ENCODE measurements at regions of chr20 and their contacts with region 1.

Region 1: DNA sequence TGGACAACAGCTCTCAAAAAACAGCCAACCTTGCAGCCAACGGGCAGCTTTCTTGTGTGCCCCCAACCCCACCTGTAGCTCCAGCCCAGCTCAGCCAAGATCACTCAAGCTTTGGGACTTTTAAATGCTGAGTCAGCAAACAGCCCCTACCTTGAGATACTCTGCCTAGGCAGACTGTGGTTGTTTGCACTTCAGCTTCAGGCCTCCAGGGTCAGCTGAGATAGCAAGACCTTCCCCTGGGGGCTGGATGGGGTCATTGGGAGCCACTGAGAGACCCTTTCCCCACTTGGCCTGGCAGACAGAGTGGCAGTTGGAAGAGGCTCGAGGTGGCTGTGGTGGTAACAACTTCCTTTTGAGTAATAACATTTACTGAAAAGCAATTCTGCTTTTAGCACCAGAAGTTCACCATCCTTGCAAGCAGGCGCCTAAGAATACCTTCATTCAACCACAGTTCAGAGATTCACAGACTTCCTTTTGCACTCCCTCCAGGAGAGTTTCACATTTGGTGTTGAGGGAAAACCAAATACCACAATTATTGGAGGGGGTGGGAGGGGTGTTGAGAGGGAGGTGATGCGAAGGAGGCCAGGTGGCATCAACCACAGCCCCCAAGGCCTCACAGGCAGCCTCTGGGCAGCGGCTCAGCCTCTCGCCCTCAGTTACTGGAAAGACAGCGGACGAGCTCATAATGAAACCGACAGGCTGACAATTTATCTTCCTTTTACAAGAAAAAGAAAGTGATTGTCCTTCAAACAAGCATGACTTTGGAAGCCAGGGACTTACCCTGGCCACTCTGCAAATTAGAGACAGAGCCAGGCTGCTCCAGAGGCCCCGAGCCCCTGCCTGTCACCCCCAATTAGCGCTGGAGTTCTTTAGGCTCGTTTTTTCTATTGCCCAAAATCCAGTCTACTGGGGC is 148.1 kb downstream of the CEBPB start:
- DNase-seq: peak in 5 of 9 donors; percentile 5 to 74 (median 21)
- ATAC-seq: peak; percentile 73
- H3K4me3 ChIP-seq: peak overlapping the region; percentile 27
- H3K4me3 Mint-ChIP-seq: peak overlapping the region; percentile 34 to 79 (median 62)
- H3K27ac ChIP-seq: peak overlapping the region; percentile 18
- H3K27ac Mint-ChIP-seq: peak overlapping the region; percentile 51 to 94 (median 81)
- H3K4me1 ChIP-seq: peaks cover 13 to 20% of the 10 kb centered on the region in 2 donors
- H3K4me1 Mint-ChIP-seq: peaks cover 20 to 72% (median 25%) of the 10 kb centered on the region in 7 donors
- H3K27me3 ChIP-seq: no peaks in the 10 kb centered on the region
- H3K27me3 Mint-ChIP-seq: peaks cover 0 to 3% (median 0%) of the 10 kb centered on the region in 5 donors

Region 2: GRCh38 chr20:50296836-50297375 is 41.8 kb before region 1 on chr20:
- CTCF ChIA-PET with region 1: no interaction called
- POLR2A ChIA-PET with region 1: no interaction called
- intact Hi-C with region 1: loop called in 1 of 2 experiments (anchors 2 kb)
- DNase-seq: no peak
- ATAC-seq: no peak
- H3K4me3 ChIP-seq: no peak overlapping the region
- H3K4me3 Mint-ChIP-seq: no peak overlapping the region
- H3K27ac ChIP-seq: no peak overlapping the region
- H3K27ac Mint-ChIP-seq: no peak overlapping the region
- H3K4me1 ChIP-seq: no peaks in the 10 kb centered on the region
- H3K4me1 Mint-ChIP-seq: peaks cover 6 to 34% (median 10%) of the 10 kb centered on the region in 7 donors
- H3K27me3 ChIP-seq: no peaks in the 10 kb centered on the region
- H3K27me3 Mint-ChIP-seq: peaks cover 0 to 5% (median 4%) of the 10 kb centered on the region in 5 donors

Region 3: DNA sequence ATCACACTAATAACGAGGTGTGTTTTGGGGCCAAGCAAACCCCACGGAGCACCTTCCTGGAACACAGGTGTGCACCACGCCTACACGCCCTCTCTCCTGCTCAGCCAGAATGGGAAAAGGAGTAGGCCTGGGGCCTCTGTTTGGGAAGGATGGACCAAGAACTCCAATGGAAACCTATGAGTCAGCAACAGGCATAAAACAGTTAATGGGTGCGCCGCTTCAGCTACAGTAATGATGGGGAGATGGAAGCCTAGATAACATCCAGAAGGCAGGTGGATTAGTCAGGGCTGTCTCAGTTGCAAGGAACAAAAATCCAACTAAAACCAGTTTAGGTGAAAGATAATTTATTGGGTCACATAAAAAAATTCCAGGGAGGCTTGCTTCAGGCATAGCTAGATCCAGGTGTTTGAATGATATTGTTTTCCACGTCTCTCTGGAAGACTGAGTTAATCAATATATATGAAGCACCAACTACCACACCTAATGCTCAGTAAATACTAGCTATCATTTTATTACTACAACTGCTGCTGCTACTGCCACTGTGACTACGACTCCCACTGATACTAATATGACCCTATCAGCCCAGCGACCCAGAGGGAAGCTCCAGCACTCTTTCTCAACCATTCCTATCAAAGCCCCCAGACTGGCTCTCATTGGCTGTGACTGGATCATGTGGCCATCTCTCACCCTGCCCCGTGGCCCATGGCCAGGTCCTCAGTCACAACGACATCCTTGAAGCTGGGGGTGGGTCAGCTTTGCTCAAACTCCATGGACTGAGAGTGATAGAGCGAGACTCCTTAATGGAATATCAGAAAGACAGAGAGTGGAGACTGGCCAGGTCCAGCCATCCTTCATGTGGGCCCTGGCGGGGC is 16.2 kb after region 1 on chr20:
- CTCF ChIA-PET with region 1: no interaction called
- POLR2A ChIA-PET with region 1: no interaction called
- intact Hi-C with region 1: no loop called
- DNase-seq: no peak
- ATAC-seq: no peak
- H3K4me3 ChIP-seq: no peak overlapping the region
- H3K4me3 Mint-ChIP-seq: no peak overlapping the region
- H3K27ac ChIP-seq: no peak overlapping the region
- H3K27ac Mint-ChIP-seq: no peak overlapping the region
- H3K4me1 ChIP-seq: no peaks in the 10 kb centered on the region
- H3K4me1 Mint-ChIP-seq: peaks cover 4 to 35% (median 6%) of the 10 kb centered on the region in 7 donors
- H3K27me3 ChIP-seq: no peaks in the 10 kb centered on the region
- H3K27me3 Mint-ChIP-seq: peaks cover 0 to 7% (median 0%) of the 10 kb centered on the region in 5 donors

Region 4: DNA sequence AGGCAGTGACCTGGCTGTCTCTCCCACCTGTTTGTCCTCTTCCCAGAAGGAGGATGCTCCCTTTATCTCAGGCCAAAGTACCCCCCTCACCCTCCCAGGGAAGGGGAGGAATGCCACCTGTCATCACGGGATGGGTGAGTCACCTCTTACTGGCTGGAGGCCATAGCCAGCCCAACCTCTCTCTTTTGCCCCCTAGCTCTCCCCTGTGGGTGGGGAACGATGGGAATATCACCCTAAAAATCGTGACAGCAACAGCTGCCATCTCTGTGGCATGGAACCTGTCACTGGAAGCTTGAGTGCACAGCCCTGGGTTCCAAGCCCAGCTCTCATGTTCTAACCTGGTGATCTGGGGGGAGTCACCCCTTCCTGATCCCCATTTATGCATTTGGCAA is 34.0 kb after region 1 on chr20:
- CTCF ChIA-PET with region 1: no interaction called
- POLR2A ChIA-PET with region 1: no interaction called
- intact Hi-C with region 1: no loop called
- DNase-seq: no peak
- ATAC-seq: no peak
- H3K4me3 ChIP-seq: no peak overlapping the region
- H3K4me3 Mint-ChIP-seq: no peak overlapping the region
- H3K27ac ChIP-seq: no peak overlapping the region
- H3K27ac Mint-ChIP-seq: no peak overlapping the region
- H3K4me1 ChIP-seq: no peaks in the 10 kb centered on the region
- H3K4me1 Mint-ChIP-seq: peaks cover 0 to 29% (median 5%) of the 10 kb centered on the region in 7 donors
- H3K27me3 ChIP-seq: no peaks in the 10 kb centered on the region
- H3K27me3 Mint-ChIP-seq: peaks cover 0 to 10% (median 5%) of the 10 kb centered on the region in 5 donors

Region 5: DNA sequence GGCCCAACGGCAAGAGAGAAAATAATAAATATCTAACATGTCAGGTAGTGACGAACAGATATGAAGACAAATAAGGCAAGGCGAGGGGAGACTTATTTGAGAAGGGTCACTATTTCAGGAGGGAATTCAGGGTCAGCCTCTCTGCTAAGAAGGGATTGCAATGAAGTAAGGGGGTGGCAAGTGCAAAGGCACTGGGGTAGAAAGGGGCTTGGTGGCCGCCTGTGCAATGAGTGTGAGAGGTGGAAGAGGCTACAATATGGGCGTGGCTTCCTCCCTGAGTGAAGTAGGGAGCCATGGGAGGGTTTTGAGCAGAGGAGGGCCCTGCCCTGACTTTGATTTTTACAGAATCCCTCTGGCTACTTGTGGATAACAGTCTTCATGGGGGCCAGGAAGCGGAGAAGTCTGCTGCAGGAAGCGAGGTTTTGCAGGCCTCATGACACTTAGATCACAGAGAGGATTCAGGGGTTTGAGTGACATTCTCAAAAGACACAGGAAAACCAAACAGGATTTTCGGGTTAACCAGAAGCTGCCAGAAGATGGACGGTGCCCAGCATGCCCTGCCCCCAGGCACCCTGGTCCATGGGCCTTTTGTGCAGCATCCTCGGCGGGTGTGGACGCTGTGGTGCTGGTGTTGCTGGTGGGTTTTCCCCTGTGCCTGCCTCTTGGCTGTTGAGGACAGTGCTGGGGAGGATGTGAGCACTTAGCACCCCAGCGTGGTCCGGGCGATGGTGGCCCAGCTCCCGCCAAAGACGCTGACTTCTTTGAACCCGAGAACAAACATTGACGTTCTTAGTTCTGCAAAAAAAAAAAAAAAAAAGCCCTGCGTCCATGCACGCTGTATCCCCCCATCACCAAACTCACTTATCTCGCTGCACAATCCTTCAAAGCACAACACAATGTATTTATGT is 47.3 kb after region 1 on chr20:
- CTCF ChIA-PET with region 1: no interaction called
- POLR2A ChIA-PET with region 1: no interaction called
- intact Hi-C with region 1: loop called (anchors 1 to 5 kb)
- DNase-seq: peak; percentile 36 to 78 (median 64)
- ATAC-seq: peak; percentile 93
- H3K4me3 ChIP-seq: no peak overlapping the region
- H3K4me3 Mint-ChIP-seq: peak overlapping the region; percentile 38 to 76 (median 61)
- H3K27ac ChIP-seq: no peak overlapping the region
- H3K27ac Mint-ChIP-seq: peak overlapping the region; percentile 51 to 90 (median 84)
- H3K4me1 ChIP-seq: peaks cover 26 to 37% of the 10 kb centered on the region in 2 donors
- H3K4me1 Mint-ChIP-seq: peaks cover 46 to 71% (median 59%) of the 10 kb centered on the region in 7 donors
- H3K27me3 ChIP-seq: no peaks in the 10 kb centered on the region
- H3K27me3 Mint-ChIP-seq: no peaks in the 10 kb centered on the region

Measured in naive thymus-derived CD4-positive, alpha-beta T cell (primary cell).